MCF 10A (cell line): ENCODE measurements at regions of chr16 and their contacts with region 1.

Region 1: GRCh38 chr16:68951991-68952877 is 108.9 kb downstream of the TANGO6 start:
- DNase-seq: peak; percentile 72
- H3K4me3 Mint-ChIP-seq: no peak overlapping the region
- H3K27ac Mint-ChIP-seq: peak overlapping the region; percentile 49
- H3K4me1 Mint-ChIP-seq: peaks cover 10% of the 10 kb centered on the region
- H3K27me3 Mint-ChIP-seq: no peaks in the 10 kb centered on the region
- CTCF ChIP-seq: no peak

Region 2: GRCh38 chr16:68921654-68922053 is 30.6 kb before region 1 on chr16:
- CTCF ChIA-PET with region 1: interaction called, 5 read pairs
- POLR2A ChIA-PET with region 1: interaction called, 11 read pairs
- intact Hi-C with region 1: no loop called
- DNase-seq: peak; percentile 89
- H3K4me3 Mint-ChIP-seq: peak overlapping the region; percentile 3
- H3K27ac Mint-ChIP-seq: peak overlapping the region; percentile 95
- H3K4me1 Mint-ChIP-seq: peaks cover 23% of the 10 kb centered on the region
- H3K27me3 Mint-ChIP-seq: no peaks in the 10 kb centered on the region
- CTCF ChIP-seq: no peak

Region 3: DNA sequence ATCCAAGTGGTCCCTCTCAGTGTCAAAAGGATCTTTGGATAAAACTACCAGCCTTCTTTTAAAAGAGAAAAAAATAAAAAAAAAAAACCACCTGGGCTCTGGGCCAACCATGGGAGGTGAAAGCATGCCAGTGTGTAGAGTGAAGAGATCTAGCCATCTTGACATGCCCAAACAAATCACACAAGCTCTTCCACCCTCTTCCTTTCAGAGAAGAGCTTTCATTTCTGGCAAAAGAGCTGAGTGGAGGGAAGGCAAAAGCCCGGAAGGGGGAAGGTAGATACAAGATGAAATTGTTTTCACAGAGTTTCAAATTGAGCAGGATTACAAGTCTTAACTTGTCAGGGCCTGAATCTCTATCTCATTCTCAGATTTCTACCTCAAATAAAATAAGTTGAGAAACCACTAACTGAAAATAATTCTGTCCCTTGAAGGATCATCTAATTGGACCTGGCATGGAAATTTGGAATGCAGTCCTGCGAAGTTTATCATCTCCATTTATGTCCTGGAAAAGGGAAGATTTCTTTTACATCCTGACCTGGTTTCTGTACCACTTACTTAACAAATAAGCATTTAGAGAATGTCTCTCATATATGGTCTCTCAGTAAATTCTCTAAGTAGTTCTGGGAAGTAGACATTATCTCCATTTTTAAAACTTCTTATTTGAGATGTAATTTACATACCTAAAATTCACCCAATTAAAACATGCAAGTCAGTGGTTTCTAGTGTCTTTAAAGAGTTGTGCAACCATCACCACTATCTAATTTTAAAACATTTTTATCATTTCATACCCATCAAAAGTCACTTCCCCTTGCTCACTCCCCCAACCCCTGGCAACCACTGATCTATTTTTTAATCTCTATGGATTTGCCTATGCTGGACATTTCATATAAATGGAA is 15.2 kb before region 1 on chr16:
- CTCF ChIA-PET with region 1: interaction called, 4 read pairs
- POLR2A ChIA-PET with region 1: interaction called, 17 read pairs
- intact Hi-C with region 1: no loop called
- DNase-seq: peak; percentile 95
- H3K4me3 Mint-ChIP-seq: no peak overlapping the region
- H3K27ac Mint-ChIP-seq: peak overlapping the region; percentile 94
- H3K4me1 Mint-ChIP-seq: peaks cover 28% of the 10 kb centered on the region
- H3K27me3 Mint-ChIP-seq: no peaks in the 10 kb centered on the region
- CTCF ChIP-seq: no peak

Region 4: DNA sequence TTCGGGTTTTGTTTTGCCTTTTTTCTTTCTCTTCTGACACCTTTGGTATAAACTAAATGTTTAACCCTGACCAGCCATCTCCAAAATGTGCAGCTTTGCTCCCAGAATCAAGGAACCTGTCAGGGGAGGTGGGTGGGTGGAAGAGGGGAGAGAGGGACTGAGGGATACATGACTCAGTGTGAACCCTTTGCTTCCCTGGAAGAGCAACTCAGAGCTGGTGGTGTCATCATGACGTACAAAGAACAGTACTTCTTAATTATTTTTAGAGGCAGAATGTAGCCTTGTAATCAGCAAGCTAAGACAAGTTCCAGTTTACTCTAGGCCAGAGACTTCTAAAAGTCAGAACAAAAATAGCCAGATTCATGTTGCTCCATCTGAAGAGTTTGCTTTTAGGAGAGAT is 33.6 kb after region 1 on chr16:
- CTCF ChIA-PET with region 1: interaction called, 4 read pairs
- POLR2A ChIA-PET with region 1: interaction called, 16 read pairs
- intact Hi-C with region 1: no loop called
- DNase-seq: peak; percentile 84
- H3K4me3 Mint-ChIP-seq: no peak overlapping the region
- H3K27ac Mint-ChIP-seq: peak overlapping the region; percentile 89
- H3K4me1 Mint-ChIP-seq: peaks cover 13% of the 10 kb centered on the region
- H3K27me3 Mint-ChIP-seq: no peaks in the 10 kb centered on the region
- CTCF ChIP-seq: no peak

Region 5: GRCh38 chr16:69381231-69381630 is 429.0 kb after region 1 on chr16:
- CTCF ChIA-PET with region 1: no interaction called
- POLR2A ChIA-PET with region 1: no interaction called
- intact Hi-C with region 1: no loop called
- DNase-seq: no peak
- H3K4me3 Mint-ChIP-seq: no peak overlapping the region
- H3K27ac Mint-ChIP-seq: no peak overlapping the region
- H3K4me1 Mint-ChIP-seq: peaks cover 18% of the 10 kb centered on the region
- H3K27me3 Mint-ChIP-seq: no peaks in the 10 kb centered on the region
- CTCF ChIP-seq: no peak